ENCODE measurements at regions of chr21 and their contacts with region 1.

Region 1: DNA sequence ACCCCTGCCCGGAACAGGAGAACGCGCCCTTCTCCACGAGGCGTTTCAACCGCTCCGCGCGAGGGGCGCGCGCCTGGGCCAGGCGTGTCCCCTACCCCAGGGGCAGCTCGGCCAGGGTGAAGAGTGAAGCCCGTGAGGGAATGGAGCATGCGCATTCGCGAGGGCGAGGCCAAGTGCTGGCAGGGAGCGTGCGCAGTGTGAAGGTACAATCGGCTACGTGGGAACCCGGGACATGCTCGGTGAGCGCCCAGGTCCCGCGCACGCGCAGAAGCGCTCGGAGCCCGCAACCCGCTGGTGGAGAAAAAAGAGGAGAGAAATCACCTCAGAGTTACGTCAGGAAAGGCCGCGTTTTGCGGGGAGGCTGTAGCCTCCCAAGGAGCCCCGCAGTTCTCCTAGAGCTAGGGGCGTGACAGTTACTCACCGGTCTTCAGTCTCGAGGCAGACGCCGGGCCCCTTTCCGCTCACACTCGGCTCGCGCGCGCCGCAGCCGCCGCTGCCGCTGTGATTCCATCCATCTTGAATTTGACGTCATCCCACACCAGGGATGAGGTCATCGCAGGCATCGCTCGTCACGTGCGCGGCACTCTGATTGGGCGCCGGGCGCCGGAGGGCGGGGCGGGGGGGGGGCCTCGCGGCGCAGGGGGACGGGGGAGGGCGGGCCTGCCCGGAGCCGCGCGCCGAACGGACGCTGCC is at the start of gene ZBTB21:
- DNase-seq: peak; percentile 95
- H3K4me3 ChIP-seq: peak within 1 kb of the TSS; percentile 79 to 83 (median 80)
- H3K27ac ChIP-seq: peak within 1 kb of the TSS; percentile 95
- H3K4me1 ChIP-seq: peaks cover 5% of the 10 kb centered on the region
- H3K27me3 ChIP-seq: no peaks in the 10 kb centered on the region
- CTCF ChIP-seq: no peak
- total RNA-seq, gene ZBTB21: 16.3 to 22.4 TPM

Region 2: GRCh38 chr21:41953831-41954653 is 55.9 kb before region 1 on chr21 and contains the start of gene C2CD2:
- CTCF ChIA-PET with region 1: interaction called, 3 read pairs
- dilution Hi-C with region 1: no loop called
- in situ Hi-C with region 1: no loop called
- intact Hi-C with region 1: loop called (anchors 2 kb)
- DNase-seq: peak; percentile 50
- H3K4me3 ChIP-seq: peak within 1 kb of the TSS; percentile 63 to 81 (median 76)
- H3K27ac ChIP-seq: peak within 1 kb of the TSS; percentile 51
- H3K4me1 ChIP-seq: peaks cover 46% of the 10 kb centered on the region
- H3K27me3 ChIP-seq: no peaks in the 10 kb centered on the region
- CTCF ChIP-seq: no peak
- total RNA-seq, gene C2CD2: 29.1 to 36.7 TPM

Region 3: GRCh38 chr21:42040411-42041180 is 30.6 kb after region 1 on chr21:
- CTCF ChIA-PET with region 1: no interaction called
- dilution Hi-C with region 1: loop called (anchors 5 kb)
- in situ Hi-C with region 1: no loop called
- intact Hi-C with region 1: loop called (anchors 1 kb)
- DNase-seq: peak; percentile 99
- H3K4me3 ChIP-seq: no peak overlapping the region
- H3K27ac ChIP-seq: peak overlapping the region; percentile 89
- H3K4me1 ChIP-seq: peaks cover 23% of the 10 kb centered on the region
- H3K27me3 ChIP-seq: no peaks in the 10 kb centered on the region
- CTCF ChIP-seq: no peak